Heart right ventricle (tissue), 16 donors: ENCODE measurements at regions of chr3 and their contacts with region 1.

Region 1: GRCh38 chr3:14651440-14652251 is at the start of gene CCDC174:
- DNase-seq: peak; percentile 88 to 99
- ATAC-seq: peak; percentile 98 to 99 (median 98)
- H3K4me3 ChIP-seq: peak within 1 kb of the TSS; percentile 42 to 92 (median 76)
- H3K27ac ChIP-seq: peak within 1 kb of the TSS; percentile 64 to 97 (median 84)
- H3K4me1 ChIP-seq: peaks cover 0 to 61% (median 45%) of the 10 kb centered on the region in 9 donors
- H3K27me3 ChIP-seq: no peaks in the 10 kb centered on the region
- CTCF ChIP-seq: peak in 1 of 9 donors; percentile 4
- total RNA-seq, gene CCDC174: 10.0 to 15.4 (median 11.6) TPM

Region 2: DNA sequence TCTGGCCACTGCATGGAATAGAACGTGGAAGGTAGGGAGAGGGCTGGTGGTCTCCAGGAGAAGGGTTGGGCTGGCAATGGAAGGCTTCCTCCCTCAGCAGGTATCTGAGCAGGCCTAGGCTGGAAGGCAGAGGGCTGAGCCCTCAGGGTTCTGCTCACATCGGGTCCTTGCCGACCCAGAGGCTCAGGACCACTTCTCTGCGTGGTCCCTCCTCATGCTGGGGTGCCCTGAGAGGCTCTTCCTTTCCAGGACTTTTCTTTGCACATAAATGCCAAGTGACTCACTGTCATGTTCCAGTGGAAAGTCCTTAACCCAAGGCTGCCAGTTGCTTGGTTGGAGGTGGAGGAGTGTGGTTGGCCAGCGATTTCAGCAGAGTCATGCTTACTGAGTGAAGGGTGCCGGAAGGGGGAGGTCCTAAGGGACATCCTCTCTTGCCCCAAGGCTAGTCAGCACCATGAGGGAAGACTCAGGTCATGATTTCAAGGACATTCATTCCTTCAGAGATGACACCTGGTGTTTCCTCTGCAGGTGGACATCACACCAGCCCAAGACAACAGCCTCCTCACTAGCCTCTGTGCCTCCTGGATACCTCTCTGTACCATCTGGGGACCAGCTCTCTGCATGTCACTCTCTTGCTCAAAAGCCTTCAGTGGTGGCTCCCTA is 241.0 kb before region 1 on chr3:
- intact Hi-C with region 1: no loop called
- DNase-seq: no peak
- ATAC-seq: peak in 5 of 8 donors; percentile 28 to 81 (median 57)
- H3K4me3 ChIP-seq: no peak overlapping the region
- H3K27ac ChIP-seq: peak overlapping the region in 4 of 10 donors; percentile 4 to 76 (median 33)
- H3K4me1 ChIP-seq: peaks cover 0 to 77% (median 18%) of the 10 kb centered on the region in 9 donors
- H3K27me3 ChIP-seq: peaks cover 0 to 5% (median 0%) of the 10 kb centered on the region in 7 donors
- CTCF ChIP-seq: no peak

Region 3: GRCh38 chr3:14555835-14556234 is 95.8 kb before region 1 on chr3:
- intact Hi-C with region 1: loop called in 1 of 10 experiments (anchors 5 kb)
- DNase-seq: peak; percentile 39 to 55
- ATAC-seq: peak; percentile 72 to 92 (median 82)
- H3K4me3 ChIP-seq: peak overlapping the region in 9 of 10 donors; percentile 15 to 52 (median 35)
- H3K27ac ChIP-seq: peak overlapping the region in 3 of 10 donors; percentile 47 to 54 (median 51)
- H3K4me1 ChIP-seq: peaks cover 0 to 35% (median 17%) of the 10 kb centered on the region in 9 donors
- H3K27me3 ChIP-seq: peaks cover 0 to 29% (median 14%) of the 10 kb centered on the region in 7 donors
- CTCF ChIP-seq: no peak

Region 4: DNA sequence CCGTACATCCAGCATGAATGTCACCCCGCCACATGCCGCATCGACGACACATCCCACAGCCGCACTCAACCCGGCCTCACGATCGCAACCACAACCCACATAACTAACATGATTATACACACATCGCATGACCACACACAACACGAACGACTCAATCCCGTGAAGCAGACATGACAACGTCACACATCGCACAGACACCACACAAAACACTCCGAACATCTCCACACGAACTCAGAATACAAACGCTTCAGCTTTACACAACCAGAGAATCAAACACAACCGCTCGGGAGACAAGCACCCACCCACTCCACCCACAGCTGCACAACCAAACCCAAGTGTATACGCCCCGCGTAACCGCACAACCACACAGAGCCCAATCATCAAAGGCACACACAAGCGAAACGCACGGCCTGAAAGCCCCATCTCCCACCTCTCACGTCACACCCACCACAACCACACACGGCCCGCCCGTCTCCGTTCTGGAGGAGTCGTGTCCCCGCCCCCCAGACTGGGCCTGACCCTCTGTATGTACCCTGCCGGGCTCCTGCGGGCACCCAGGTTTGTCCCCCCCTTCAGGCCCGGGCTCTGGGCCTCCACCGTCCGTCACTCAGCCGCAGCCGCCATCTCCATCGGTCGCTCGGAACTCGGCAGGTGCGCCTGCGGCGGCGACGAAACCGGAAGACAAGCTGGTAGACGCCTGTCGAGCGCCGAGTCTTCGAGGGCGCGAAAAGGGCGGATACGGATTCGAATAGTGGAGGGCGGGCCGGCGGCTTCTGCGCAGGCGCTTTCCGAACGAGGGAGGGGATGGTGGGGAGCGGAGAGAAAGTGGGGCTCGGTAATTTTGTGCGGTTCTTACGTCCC is 447.1 kb after region 1 on chr3 and contains the start of gene RBSN:
- intact Hi-C with region 1: loop called in 1 of 10 experiments (anchors 5 kb)
- DNase-seq: peak; percentile 95 to 96
- ATAC-seq: peak; percentile 77 to 91 (median 84)
- H3K4me3 ChIP-seq: peak within 1 kb of the TSS; percentile 68 to 97 (median 86)
- H3K27ac ChIP-seq: peak within 1 kb of the TSS; percentile 18 to 93 (median 86)
- H3K4me1 ChIP-seq: peaks cover 3 to 51% (median 37%) of the 10 kb centered on the region in 9 donors
- H3K27me3 ChIP-seq: no peaks in the 10 kb centered on the region
- CTCF ChIP-seq: no peak
- total RNA-seq, gene RBSN: 17.4 to 23.8 (median 21.2) TPM